Transverse colon (tissue), 4 donors: ENCODE measurements at regions of chr3 and their contacts with region 1.

Region 1: DNA sequence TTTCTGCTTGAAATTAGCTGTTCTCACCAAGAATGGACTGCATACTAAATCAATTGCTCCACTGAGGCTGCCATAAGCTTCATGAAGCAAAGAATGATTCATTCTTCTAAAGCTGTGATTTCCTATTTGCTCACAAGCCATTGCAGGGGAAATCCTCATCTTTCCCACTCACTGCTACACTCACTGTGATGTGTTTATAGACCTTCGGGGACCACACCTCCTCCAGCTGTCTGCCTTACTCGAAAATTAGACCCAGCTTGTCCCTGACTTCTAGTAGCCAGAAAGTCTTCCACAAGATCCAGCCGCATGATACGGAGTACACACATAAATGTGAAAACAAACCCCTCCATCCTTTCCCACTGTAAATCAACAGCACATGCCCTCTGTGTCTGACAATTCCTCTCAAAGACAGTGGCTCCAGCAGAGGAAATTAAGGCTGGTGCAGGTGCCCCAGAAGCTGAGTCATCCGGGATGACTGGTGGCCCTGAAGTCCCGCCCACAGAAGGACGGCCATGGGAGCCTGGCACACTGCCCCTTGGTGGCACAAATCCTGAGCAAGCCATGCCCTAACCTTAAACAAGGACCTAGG is 172.0 kb downstream of the STT3B start:
- DNase-seq: peak; percentile 66
- H3K4me3 ChIP-seq: no peak overlapping the region
- H3K27ac ChIP-seq: peak overlapping the region in 1 of 4 donors; percentile 4
- H3K4me1 ChIP-seq: peaks cover 0 to 14% (median 3%) of the 10 kb centered on the region in 4 donors
- H3K27me3 ChIP-seq: no peaks in the 10 kb centered on the region
- CTCF ChIP-seq: no peak
- EP300 ChIP-seq: no peak
- POLR2A ChIP-seq: no peak

Region 2: DNA sequence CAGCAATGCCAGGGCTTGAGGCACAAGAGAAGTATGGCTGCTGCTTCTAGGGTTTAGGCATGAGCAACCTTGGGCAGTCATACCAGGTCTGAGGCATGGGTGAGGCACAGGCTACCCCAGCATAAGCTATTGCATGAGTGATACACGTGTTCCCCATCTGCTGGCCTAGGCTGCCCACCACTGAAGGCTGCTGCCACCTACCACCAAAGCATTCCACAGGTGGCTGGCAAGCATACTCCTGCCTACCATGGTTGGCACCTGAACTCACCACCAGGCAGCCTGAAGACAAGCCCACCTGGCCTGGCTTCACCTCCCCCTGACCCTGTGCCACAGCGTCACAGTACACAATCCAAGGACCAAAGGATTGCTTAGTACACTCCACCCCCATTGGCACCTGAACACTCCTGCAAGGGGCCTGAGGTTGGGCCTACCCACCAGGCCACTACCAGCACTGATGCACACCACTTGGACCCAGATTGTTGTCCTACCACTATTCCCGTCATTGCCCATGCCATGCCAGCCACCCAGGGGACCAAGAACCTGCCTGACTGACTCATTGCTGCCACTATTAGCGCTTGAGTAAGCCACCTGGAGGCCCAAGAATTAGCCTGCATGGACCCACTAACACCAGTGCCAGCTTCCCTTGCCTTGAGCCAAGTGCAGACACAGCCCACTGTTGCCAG is 56.3 kb before region 1 on chr3:
- in situ Hi-C with region 1: no loop called
- intact Hi-C with region 1: no loop called
- DNase-seq: no peak
- H3K4me3 ChIP-seq: no peak overlapping the region
- H3K27ac ChIP-seq: no peak overlapping the region
- H3K4me1 ChIP-seq: no peaks in the 10 kb centered on the region
- H3K27me3 ChIP-seq: no peaks in the 10 kb centered on the region
- CTCF ChIP-seq: no peak
- EP300 ChIP-seq: no peak
- POLR2A ChIP-seq: no peak

Region 3: GRCh38 chr3:31680072-31680870 is 24.4 kb before region 1 on chr3:
- in situ Hi-C with region 1: no loop called
- intact Hi-C with region 1: loop called (anchors 1 kb)
- DNase-seq: no peak
- H3K4me3 ChIP-seq: no peak overlapping the region
- H3K27ac ChIP-seq: no peak overlapping the region
- H3K4me1 ChIP-seq: no peaks in the 10 kb centered on the region
- H3K27me3 ChIP-seq: no peaks in the 10 kb centered on the region
- CTCF ChIP-seq: no peak
- EP300 ChIP-seq: no peak
- POLR2A ChIP-seq: no peak